ENCODE measurements at regions of chr6 and their contacts with region 1.

Region 1: DNA sequence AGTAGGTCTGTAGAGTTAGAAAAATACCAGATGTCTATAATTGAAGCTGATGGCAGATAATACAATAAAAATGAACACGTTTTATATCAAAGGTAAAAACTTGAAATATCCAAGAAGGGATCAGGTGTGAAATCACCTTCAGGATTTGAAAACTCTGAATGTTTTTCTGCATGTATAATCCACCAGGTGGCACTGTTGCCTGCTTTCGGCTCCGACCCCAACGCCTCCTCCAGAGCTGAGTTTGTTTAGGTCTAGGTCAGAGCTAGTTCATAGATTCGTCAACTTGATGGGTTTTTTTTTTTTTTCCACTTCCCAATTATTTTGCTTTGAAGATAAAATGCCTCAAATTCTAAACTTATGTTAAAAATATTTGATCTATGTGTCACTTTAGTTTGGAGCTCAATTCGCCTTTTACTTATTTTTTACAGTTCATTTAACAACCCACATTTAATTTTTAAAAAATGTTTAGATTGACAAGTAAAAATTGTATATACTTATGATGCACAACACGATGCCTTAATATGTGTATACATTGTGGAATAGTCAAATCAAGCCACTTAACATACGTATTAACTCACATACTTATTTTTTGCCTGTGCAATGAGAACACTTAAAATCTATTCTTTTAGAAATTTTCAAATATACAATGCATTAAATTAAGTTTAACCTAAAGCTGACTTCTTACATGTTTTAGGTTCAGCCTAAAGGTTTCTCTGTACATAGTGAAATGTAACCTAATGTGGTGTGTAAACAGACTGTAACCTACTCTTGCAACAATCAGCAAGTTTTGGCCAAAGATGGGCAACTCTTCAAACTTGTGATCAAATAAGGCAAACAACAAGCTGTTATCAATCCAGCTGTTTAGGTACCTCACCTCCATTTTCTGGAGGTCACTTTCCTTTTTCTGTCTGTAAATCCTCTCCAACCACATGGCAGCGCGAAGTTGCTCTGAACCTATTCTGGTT is 39.4 kb upstream of the ENPP4 start:
- DNase-seq: peak; percentile 41
- ATAC-seq: peak; percentile 78
- H3K4me3 ChIP-seq: no peak overlapping the region
- H3K27ac ChIP-seq: no peak overlapping the region
- H3K4me1 ChIP-seq: no peaks in the 10 kb centered on the region
- H3K27me3 ChIP-seq: peaks cover 4% of the 10 kb centered on the region
- CTCF ChIP-seq: peak; percentile 52 to 79 (median 79); a peak in 5 of 6 replicates
- POLR2A ChIP-seq: no peak
- RAD21 ChIP-seq: peak; percentile 88

Region 2: GRCh38 chr6:45930420-45931040 is 159.9 kb before region 1 on chr6:
- CTCF ChIA-PET with region 1: interaction called, 7 read pairs
- POLR2A ChIA-PET with region 1: no interaction called
- RAD21 ChIA-PET with region 1: no interaction called
- intact Hi-C with region 1: loop called (anchors 5 kb)
- DNase-seq: peak; percentile 54
- ATAC-seq: peak; percentile 92
- H3K4me3 ChIP-seq: no peak overlapping the region
- H3K27ac ChIP-seq: no peak overlapping the region
- H3K4me1 ChIP-seq: peaks cover 0 to 4% of the 10 kb centered on the region in 2 experiments; a peak in 1 of 4 replicates
- H3K27me3 ChIP-seq: no peaks in the 10 kb centered on the region
- CTCF ChIP-seq: peak; percentile 67 to 99 (median 94); a peak in 5 of 6 replicates
- POLR2A ChIP-seq: no peak
- RAD21 ChIP-seq: peak; percentile 88

Region 3: GRCh38 chr6:46207174-46207573 is 116.8 kb after region 1 on chr6:
- CTCF ChIA-PET with region 1: interaction called, 10 read pairs
- POLR2A ChIA-PET with region 1: no interaction called
- RAD21 ChIA-PET with region 1: interaction called in 1 of 2 experiments, 3 read pairs
- intact Hi-C with region 1: no loop called
- DNase-seq: no peak
- ATAC-seq: no peak
- H3K4me3 ChIP-seq: no peak overlapping the region
- H3K27ac ChIP-seq: no peak overlapping the region
- H3K4me1 ChIP-seq: no peaks in the 10 kb centered on the region
- H3K27me3 ChIP-seq: no peaks in the 10 kb centered on the region
- CTCF ChIP-seq: no peak
- POLR2A ChIP-seq: no peak
- RAD21 ChIP-seq: peak; percentile 40

Region 4: DNA sequence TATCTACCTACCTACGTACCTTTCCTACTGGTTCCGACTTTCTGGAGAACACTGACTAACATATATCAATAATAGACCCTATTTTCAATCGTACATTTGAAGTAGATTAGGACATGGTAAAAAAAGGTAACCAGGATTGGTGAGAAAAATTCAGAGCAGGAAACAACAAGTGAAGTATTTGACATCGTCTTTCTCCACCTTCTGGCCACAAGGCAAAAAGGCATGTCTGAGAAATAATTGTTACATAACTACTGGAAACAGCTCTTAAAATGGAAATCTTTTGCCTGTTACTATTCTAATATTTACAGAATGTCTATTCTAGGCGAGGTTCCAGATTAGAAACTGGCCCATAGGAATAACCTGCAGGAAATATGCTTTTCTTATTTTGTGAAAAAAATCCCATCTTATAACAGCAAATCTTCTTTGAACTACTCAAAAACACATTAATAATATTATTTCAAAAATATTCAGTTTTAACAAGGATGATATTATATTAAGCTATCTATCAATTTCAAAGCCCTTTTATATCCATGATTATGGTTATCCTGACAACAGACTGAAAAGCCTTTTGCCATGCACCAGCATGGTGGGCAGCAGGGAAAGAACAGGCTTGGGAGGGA is 320.0 kb after region 1 on chr6:
- CTCF ChIA-PET with region 1: interaction called, 43 read pairs
- POLR2A ChIA-PET with region 1: no interaction called
- RAD21 ChIA-PET with region 1: interaction called, 4 to 13 read pairs
- intact Hi-C with region 1: loop called (anchors 1 kb)
- DNase-seq: peak; percentile 32
- ATAC-seq: peak; percentile 44; the same call in 1 of the 2 replicates
- H3K4me3 ChIP-seq: no peak overlapping the region
- H3K27ac ChIP-seq: no peak overlapping the region
- H3K4me1 ChIP-seq: no peaks in the 10 kb centered on the region
- H3K27me3 ChIP-seq: no peaks in the 10 kb centered on the region
- CTCF ChIP-seq: peak; percentile 49 to 77 (median 76); a peak in 5 of 6 replicates
- POLR2A ChIP-seq: no peak
- RAD21 ChIP-seq: peak; percentile 91

Region 5: GRCh38 chr6:46993846-46994245 is 903.4 kb after region 1 on chr6:
- CTCF ChIA-PET with region 1: no interaction called
- POLR2A ChIA-PET with region 1: no interaction called
- RAD21 ChIA-PET with region 1: no interaction called
- intact Hi-C with region 1: loop called (anchors 10 kb)
- DNase-seq: peak; percentile 90
- ATAC-seq: peak; percentile 93
- H3K4me3 ChIP-seq: peak overlapping the region in 1 of 2 experiments; percentile 8; a peak in 1 of 4 replicates
- H3K27ac ChIP-seq: peak overlapping the region; percentile 42; the same call in 1 of the 2 replicates
- H3K4me1 ChIP-seq: peaks cover 15 to 70% of the 10 kb centered on the region in 2 experiments
- H3K27me3 ChIP-seq: no peaks in the 10 kb centered on the region
- CTCF ChIP-seq: no peak
- POLR2A ChIP-seq: no peak
- RAD21 ChIP-seq: 0 out of 2 replicates have a peak, but pooled peaks have one; percentile 28